ENCODE measurements at regions of chr12 and their contacts with region 1.

Region 1: DNA sequence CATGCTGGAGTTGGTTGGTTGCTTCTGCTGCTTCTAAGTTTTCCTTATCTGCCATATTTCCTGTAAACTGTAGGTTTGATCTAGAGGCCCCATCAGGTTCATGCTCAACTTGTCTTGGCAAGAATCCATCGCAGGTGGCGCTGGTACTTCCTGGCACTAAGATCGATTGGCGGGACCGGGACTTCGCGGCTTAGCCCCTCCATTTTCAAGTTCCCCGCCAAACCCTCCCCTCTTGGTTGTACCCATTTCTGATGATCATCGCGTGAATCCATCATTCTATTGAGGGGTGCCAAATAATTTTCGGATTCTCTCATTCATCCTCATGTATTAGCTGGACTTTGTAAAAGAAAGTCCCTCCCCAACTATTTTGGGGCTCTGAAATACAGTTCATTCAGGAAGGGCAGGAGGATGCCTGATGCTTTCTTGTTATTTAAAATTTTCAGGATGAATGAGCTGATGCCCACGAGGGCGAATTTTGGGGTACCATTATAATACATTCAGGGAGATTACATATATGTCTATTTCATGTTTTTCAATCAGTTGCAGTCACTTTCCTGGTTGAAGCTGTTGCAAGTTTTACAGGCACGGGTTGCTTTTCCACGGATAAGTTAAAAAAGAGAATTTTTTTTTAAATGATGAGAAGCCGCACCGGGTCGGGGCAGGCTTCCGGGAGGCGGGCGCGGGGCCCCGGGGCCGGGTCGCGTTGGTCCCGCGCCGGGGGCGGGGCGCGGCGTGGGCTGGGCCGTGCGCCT is 395 bp upstream of the BRI3BP start:
- DNase-seq: peak; percentile 95
- H3K4me3 ChIP-seq: peak overlapping the region; percentile 87
- H3K27ac ChIP-seq: peak overlapping the region; percentile 96
- H3K4me1 ChIP-seq: peaks cover 41% of the 10 kb centered on the region
- CTCF ChIP-seq: peak; percentile 91

Region 2: GRCh38 chr12:124588751-124589267 is 404.2 kb before region 1 on chr12:
- CTCF ChIA-PET with region 1: no interaction called
- POLR2A ChIA-PET with region 1: no interaction called
- intact Hi-C with region 1: no loop called
- DNase-seq: no peak
- H3K4me3 ChIP-seq: no peak overlapping the region
- H3K27ac ChIP-seq: no peak overlapping the region
- H3K4me1 ChIP-seq: no peaks in the 10 kb centered on the region
- CTCF ChIP-seq: no peak

Region 3: GRCh38 chr12:124979568-124979967 is 13.5 kb before region 1 on chr12:
- CTCF ChIA-PET with region 1: no interaction called
- POLR2A ChIA-PET with region 1: no interaction called
- intact Hi-C with region 1: no loop called
- DNase-seq: no peak
- H3K4me3 ChIP-seq: no peak overlapping the region
- H3K27ac ChIP-seq: no peak overlapping the region
- H3K4me1 ChIP-seq: peaks cover 10% of the 10 kb centered on the region
- CTCF ChIP-seq: 0 out of 2 replicates have a peak, but pooled peaks have one; percentile 17

Region 4: GRCh38 chr12:125065021-125065795 is 72.2 kb after region 1 on chr12 and contains the start of gene AACS:
- CTCF ChIA-PET with region 1: no interaction called
- POLR2A ChIA-PET with region 1: no interaction called
- intact Hi-C with region 1: loop called (anchors 1 kb)
- DNase-seq: peak; percentile 83
- H3K4me3 ChIP-seq: peak within 1 kb of the TSS; percentile 85
- H3K27ac ChIP-seq: no peak within 1 kb of the TSS
- H3K4me1 ChIP-seq: peaks cover 3% of the 10 kb centered on the region
- CTCF ChIP-seq: peak; percentile 33; the same call in 1 of the 2 replicates
- total RNA-seq, gene AACS: 10.2 and 12.0 TPM in 2 replicates

Region 5: GRCh38 chr12:125149160-125150108 is 156.4 kb after region 1 on chr12:
- CTCF ChIA-PET with region 1: interaction called, 3 read pairs
- POLR2A ChIA-PET with region 1: interaction called, 5 read pairs
- intact Hi-C with region 1: loop called (anchors 2 kb)
- DNase-seq: peak; percentile 99
- H3K4me3 ChIP-seq: peak overlapping the region; percentile 92
- H3K27ac ChIP-seq: peak overlapping the region; percentile 98
- H3K4me1 ChIP-seq: peaks cover 45% of the 10 kb centered on the region
- CTCF ChIP-seq: no peak

Measured in OCI-LY7 (cell line).